ENCODE measurements at regions of chr5 and their contacts with region 1.

Region 1: DNA sequence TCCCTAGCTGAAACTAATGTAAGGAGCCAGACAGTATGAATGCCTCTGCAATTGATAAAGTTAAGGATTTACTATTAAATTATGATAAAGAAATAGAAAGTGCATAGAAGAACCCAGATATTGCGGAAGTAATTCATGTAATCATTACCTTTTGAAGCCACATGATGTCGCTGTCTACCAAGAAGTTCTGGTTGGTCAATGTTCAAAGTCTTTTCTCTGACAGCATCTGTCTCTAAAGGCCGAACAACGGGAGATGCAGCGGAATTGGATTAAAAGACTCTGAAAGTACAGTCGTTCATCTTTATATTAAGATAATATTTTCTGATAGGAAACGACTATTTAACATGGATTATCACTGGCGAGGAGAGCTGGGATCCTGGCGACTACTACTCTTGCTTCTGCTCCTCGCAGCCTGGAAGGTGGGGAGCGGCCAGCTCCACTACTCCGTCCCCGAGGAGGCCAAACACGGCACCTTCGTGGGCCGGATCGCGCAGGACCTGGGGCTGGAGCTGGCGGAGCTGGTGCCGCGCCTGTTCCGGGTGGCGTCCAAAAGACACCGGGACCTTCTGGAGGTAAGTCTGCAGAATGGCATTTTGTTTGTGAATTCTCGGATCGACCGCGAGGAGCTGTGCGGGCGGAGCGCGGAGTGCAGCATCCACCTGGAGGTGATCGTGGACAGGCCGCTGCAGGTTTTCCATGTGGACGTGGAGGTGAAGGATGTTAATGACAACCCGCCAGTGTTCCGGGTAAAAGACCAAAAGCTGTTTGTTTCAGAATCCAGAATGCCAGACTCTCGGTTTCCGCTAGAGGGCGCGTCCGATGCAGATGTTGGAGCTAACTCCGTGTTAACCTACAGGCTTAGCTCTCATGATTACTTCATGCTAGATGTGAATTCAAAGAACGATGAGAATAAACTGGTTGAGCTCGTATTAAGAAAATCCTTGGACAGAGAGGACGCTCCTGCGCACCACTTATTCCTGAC is at the start of gene PCDHA8:
- DNase-seq: peak; percentile 73
- H3K27ac ChIP-seq: no peak within 1 kb of the TSS
- CTCF ChIP-seq: peak; percentile 85

Region 2: GRCh38 chr5:140806834-140807775 is 34.2 kb before region 1 on chr5 and contains the start of gene PCDHA4:
- CTCF ChIA-PET with region 1: interaction called, 10 read pairs
- POLR2A ChIA-PET with region 1: no interaction called
- DNase-seq: no peak
- H3K27ac ChIP-seq: no peak within 1 kb of the TSS
- CTCF ChIP-seq: no peak

Region 3: GRCh38 chr5:140862441-140863295 is 21.4 kb after region 1 on chr5:
- CTCF ChIA-PET with region 1: interaction called, 123 read pairs
- POLR2A ChIA-PET with region 1: interaction called, 5 read pairs
- DNase-seq: no peak
- H3K27ac ChIP-seq: no peak overlapping the region
- CTCF ChIP-seq: no peak

Region 4: DNA sequence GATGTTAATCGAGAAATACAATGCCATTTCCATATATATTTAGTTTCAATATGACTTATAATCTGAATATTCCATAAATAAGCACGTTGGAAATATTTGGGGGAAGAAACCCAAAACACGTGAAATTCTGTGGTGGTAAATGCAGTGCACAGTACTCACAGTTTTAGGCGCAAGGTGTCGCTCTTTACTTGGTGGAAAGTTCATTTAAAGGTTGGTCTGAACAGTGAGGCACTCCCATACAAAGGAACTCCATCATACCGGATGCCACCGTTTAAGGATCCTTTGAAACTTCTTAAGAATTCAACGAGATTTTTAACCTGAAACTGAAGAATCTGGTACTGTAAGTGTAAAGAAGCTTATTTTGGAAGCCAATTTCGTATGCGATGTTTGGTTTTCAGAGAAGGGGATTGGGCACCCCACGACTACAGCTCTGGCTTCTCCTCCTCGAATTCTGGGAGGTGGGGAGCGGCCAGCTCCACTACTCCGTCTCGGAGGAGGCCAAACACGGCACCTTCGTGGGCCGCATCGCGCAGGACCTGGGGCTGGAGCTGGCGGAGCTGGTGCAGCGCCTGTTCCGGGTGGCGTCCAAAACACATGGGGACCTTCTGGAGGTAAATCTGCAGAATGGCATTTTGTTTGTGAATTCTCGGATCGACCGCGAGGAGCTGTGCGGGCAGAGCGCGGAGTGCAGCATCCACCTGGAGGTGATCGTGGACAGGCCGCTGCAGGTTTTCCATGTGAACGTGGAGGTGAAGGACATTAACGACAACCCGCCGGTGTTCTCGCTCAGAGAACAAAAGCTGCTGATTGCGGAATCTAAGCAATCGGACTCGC is 27.7 kb after region 1 on chr5 and contains the start of gene PCDHA11:
- CTCF ChIA-PET with region 1: interaction called, 123 read pairs
- POLR2A ChIA-PET with region 1: no interaction called
- DNase-seq: peak; percentile 40
- H3K27ac ChIP-seq: no peak within 1 kb of the TSS
- CTCF ChIP-seq: peak; percentile 56

Region 5: GRCh38 chr5:140882591-140882899 is 41.3 kb after region 1 on chr5:
- CTCF ChIA-PET with region 1: interaction called, 12 read pairs
- POLR2A ChIA-PET with region 1: no interaction called
- DNase-seq: peak; percentile 62
- H3K27ac ChIP-seq: no peak overlapping the region
- CTCF ChIP-seq: no peak

Region 6: GRCh38 chr5:140926443-140927227 is 85.4 kb after region 1 on chr5:
- CTCF ChIA-PET with region 1: interaction called, 13 read pairs
- POLR2A ChIA-PET with region 1: no interaction called
- DNase-seq: peak; percentile 92
- H3K27ac ChIP-seq: peak overlapping the region; percentile 59
- CTCF ChIP-seq: peak; percentile 98

Region 7: GRCh38 chr5:141050622-141051525 is 209.6 kb after region 1 on chr5 and contains the start of gene PCDHB1:
- CTCF ChIA-PET with region 1: interaction called, 12 read pairs
- POLR2A ChIA-PET with region 1: no interaction called
- DNase-seq: no peak
- H3K27ac ChIP-seq: no peak within 1 kb of the TSS
- CTCF ChIP-seq: no peak